ENCODE measurements at regions of chr16 and their contacts with region 1.

Region 1: GRCh38 chr16:76157629-76158028 is 119.6 kb upstream of the CNTNAP4 start:
- DNase-seq: no peak
- H3K4me3 ChIP-seq: no peak overlapping the region
- H3K27ac ChIP-seq: no peak overlapping the region
- H3K4me1 ChIP-seq: no peaks in the 10 kb centered on the region
- H3K27me3 ChIP-seq: no peaks in the 10 kb centered on the region
- CTCF ChIP-seq: no peak

Region 2: DNA sequence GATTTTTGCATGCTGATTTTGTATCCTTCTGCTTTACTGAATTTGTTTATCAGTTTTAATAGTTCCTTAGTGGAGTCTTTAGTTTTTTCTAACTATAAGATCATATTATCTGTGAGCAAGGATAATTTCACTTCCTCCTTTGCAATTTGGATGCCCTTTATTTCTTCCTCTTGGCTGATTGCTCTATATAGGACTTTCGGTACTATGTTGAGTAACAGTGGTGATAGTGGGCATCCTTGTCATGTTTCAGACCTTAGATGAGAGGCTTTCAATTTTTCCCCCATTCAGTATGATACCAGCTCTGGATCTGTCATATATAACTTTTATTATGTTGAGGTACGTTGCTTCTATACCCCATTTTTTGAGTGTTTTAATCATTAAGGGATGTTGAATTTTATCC is 104.9 kb before region 1 on chr16:
- CTCF ChIA-PET with region 1: no interaction called
- POLR2A ChIA-PET with region 1: no interaction called
- intact Hi-C with region 1: no loop called
- DNase-seq: no peak
- H3K4me3 ChIP-seq: no peak overlapping the region
- H3K27ac ChIP-seq: no peak overlapping the region
- H3K4me1 ChIP-seq: no peaks in the 10 kb centered on the region
- H3K27me3 ChIP-seq: no peaks in the 10 kb centered on the region
- CTCF ChIP-seq: no peak

Region 3: GRCh38 chr16:76213860-76214259 is 56.2 kb after region 1 on chr16:
- CTCF ChIA-PET with region 1: no interaction called
- POLR2A ChIA-PET with region 1: interaction called, 17 read pairs
- intact Hi-C with region 1: no loop called
- DNase-seq: no peak
- H3K4me3 ChIP-seq: no peak overlapping the region
- H3K27ac ChIP-seq: no peak overlapping the region
- H3K4me1 ChIP-seq: no peaks in the 10 kb centered on the region
- H3K27me3 ChIP-seq: no peaks in the 10 kb centered on the region
- CTCF ChIP-seq: no peak

Region 4: DNA sequence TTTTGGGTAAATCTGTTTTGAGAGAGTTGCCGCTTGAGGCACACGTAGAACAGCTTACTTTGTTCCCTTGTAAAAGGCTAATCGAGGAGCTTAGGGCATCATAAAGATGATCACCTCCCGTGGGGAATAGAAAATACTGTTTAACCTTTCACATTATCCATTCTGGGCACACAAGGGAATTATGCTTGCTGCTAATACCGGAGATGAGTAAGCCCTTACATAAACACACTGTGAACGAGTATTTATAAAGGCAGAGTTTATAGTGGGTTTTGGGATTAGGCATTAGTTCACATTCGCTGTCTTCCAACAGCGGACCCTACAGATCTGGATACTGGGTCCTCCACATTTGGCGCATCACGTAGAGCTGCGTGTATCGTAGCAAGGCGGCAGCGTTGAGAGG is 68.4 kb after region 1 on chr16:
- CTCF ChIA-PET with region 1: no interaction called
- POLR2A ChIA-PET with region 1: no interaction called
- intact Hi-C with region 1: no loop called
- DNase-seq: no peak
- H3K4me3 ChIP-seq: no peak overlapping the region
- H3K27ac ChIP-seq: no peak overlapping the region
- H3K4me1 ChIP-seq: no peaks in the 10 kb centered on the region
- H3K27me3 ChIP-seq: no peaks in the 10 kb centered on the region
- CTCF ChIP-seq: no peak